ENCODE measurements at regions of chr9 and their contacts with region 1.

Region 1: GRCh38 chr9:128361986-128362646 is 9.1 kb upstream of the URM1 start:
- DNase-seq: peak; percentile 74
- H3K4me3 Mint-ChIP-seq: peak overlapping the region; percentile 68
- H3K27ac Mint-ChIP-seq: no peak overlapping the region
- H3K4me1 Mint-ChIP-seq: peaks cover 8% of the 10 kb centered on the region
- H3K27me3 Mint-ChIP-seq: no peaks in the 10 kb centered on the region
- CTCF ChIP-seq: peak; percentile 75

Region 2: DNA sequence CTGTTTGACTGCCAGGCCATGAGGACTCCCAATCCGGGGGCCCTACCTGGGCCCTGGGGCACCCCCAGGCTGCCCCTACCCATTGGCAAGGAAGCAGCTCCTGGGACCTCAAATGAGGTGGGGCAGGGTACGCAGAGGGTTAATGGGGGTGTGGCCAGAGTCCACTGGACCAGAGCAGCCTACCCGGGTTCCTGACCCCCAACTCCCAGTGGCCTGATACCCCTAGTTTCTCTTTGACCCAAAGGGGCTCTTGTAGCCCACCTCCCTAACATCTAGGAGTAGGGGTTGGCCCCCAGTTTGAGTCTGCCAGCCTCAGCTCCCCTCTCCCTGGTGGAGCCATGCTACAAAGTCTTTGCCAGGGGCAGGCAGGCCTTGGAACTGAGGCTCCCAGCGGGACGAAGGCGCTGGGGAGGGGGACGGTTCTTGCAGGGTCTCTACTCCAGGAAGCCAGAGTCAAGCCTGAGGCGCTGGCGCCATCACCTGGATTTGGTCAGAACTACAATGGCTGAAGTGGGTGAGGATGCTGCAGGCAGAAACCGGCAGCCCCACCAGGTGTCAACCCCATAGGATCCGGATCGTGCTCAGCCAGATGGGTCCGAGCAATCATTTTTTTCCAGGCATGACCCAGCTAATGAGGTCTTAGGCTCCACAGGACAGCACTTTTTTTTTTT is 50.1 kb after region 1 on chr9:
- CTCF ChIA-PET with region 1: interaction called, 12 read pairs
- intact Hi-C with region 1: loop called (anchors 5 kb)
- DNase-seq: peak; percentile 61
- H3K4me3 Mint-ChIP-seq: no peak overlapping the region
- H3K27ac Mint-ChIP-seq: no peak overlapping the region
- H3K4me1 Mint-ChIP-seq: peaks cover 27% of the 10 kb centered on the region
- H3K27me3 Mint-ChIP-seq: peaks cover 33% of the 10 kb centered on the region
- CTCF ChIP-seq: no peak

Region 3: DNA sequence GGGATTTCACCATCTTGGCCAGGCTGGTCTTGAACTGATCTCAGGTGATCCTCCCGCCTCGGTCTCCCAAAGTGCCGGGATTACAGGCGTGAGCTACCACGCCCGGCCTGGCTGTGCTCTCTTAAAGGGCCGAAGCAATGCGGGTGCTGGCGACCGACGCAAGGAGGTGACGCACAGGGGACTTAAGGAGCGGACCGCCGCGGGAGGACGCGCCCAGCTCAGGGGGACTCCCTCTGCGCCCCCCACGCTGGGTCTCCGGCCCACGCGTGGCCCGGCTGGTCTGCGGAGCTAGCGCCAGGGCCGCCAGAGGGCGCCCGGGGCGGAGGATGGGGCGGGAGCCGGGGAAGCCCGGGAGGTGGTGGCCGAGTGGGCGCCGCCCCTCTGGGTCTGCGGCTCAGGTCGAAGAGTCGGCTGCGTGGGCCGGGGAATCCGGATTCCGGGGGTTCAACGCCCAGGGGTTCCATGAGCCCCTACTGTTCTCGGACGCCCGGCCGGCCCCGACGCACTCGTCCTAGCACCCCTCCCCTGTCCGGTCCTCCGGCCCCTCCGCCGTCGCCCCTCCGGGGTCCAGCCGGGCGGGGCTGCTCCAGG is 58.0 kb after region 1 on chr9:
- CTCF ChIA-PET with region 1: interaction called, 13 read pairs
- intact Hi-C with region 1: no loop called
- DNase-seq: peak; percentile 73
- H3K4me3 Mint-ChIP-seq: peak overlapping the region; percentile 71
- H3K27ac Mint-ChIP-seq: no peak overlapping the region
- H3K4me1 Mint-ChIP-seq: peaks cover 16% of the 10 kb centered on the region
- H3K27me3 Mint-ChIP-seq: peaks cover under 1% of the 10 kb centered on the region
- CTCF ChIP-seq: peak; percentile 71

Measured in Calu3 (cell line).